Tibial artery (tissue), 4 donors: ENCODE measurements at regions of chr21 and their contacts with region 1.

Region 1: GRCh38 chr21:44949779-44950198 is 10.0 kb downstream of the SLX9 start:
- DNase-seq: peak; percentile 89 to 93
- H3K4me3 ChIP-seq: no peak overlapping the region
- H3K27ac ChIP-seq: peak overlapping the region; percentile 93 to 96
- H3K4me1 ChIP-seq: peaks cover 5 to 81% (median 66%) of the 10 kb centered on the region in 4 donors
- H3K27me3 ChIP-seq: no peaks in the 10 kb centered on the region
- CTCF ChIP-seq: peak; percentile 91 to 95

Region 2: DNA sequence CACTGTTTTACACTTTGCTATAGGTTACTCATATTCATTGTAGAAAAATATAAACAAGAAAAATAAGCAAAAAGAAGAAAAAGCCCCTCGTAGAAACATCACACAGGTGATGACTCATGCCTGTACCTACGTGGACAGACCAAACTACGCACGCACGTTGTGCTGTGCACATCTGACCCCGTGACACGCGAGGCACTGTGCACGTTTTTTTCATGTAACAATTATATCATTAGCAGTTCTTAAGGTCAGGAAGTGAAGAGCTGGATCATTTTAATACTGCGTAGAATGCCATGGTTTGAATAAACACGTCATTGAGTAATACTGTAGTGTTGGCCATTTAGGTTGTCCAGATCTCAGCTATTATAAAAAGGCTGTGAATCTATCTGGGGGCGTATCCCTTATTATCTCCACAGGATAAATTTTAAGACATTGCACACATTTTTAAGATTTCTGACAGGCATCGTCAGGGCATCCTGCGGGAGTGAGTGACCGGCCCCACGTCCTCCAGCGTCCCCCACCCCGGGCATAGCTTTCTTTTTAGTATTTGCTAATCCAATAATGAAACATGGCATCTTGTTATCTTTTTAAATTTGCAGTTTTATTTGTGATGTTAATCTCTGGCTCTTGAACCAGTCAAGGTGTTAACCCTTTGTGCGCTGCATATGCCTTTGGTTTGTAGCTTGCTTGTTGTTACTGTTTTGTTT is 101.1 kb after region 1 on chr21:
- intact Hi-C with region 1: loop called (anchors 5 kb)
- DNase-seq: peak; percentile 77 to 92
- H3K4me3 ChIP-seq: no peak overlapping the region
- H3K27ac ChIP-seq: peak overlapping the region; percentile 92 to 98
- H3K4me1 ChIP-seq: peaks cover 5 to 95% (median 58%) of the 10 kb centered on the region in 4 donors
- H3K27me3 ChIP-seq: no peaks in the 10 kb centered on the region
- CTCF ChIP-seq: no peak

Region 3: DNA sequence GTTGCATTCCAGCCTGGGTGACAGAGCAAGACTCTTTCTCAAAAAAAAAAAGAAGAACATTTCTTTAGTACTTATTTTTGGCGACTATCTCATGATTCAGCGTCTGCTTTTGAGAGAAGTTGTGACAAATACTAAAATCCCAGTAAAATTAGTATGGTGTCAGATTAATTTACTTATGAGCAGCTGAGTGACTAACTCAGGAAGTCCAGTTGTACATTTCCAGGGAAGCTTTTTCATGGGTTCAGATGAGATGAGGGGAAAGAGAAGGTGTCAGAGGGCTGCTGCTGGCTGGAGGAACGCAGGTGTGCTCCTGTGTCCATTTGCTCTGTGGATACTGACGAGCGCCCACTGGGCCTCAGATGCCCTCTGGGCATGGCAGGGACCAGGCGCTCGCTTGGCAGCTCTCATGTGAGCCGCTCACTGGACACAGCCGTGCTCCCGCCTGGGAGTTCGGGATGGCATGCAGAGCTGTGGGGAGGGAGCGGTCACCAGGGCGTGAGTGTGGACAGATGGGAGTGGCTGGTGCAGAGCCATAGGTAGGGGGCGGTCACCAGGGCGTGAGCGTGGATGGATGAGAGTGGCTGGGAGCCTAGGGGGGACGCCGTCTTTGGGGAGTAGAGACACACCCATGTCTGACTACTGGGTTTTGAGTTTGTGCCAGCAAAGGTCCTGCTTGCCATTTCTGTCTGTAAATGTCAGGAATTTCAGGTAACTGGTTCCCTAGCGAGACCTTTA is 179.6 kb after region 1 on chr21:
- intact Hi-C with region 1: loop called (anchors 2 kb)
- DNase-seq: peak in 1 of 2 donors; percentile 78
- H3K4me3 ChIP-seq: no peak overlapping the region
- H3K27ac ChIP-seq: peak overlapping the region; percentile 77 to 80
- H3K4me1 ChIP-seq: peaks cover 0 to 96% (median 76%) of the 10 kb centered on the region in 4 donors
- H3K27me3 ChIP-seq: no peaks in the 10 kb centered on the region
- CTCF ChIP-seq: no peak